ENCODE measurements at regions of chr15 and their contacts with region 1.

Region 1: DNA sequence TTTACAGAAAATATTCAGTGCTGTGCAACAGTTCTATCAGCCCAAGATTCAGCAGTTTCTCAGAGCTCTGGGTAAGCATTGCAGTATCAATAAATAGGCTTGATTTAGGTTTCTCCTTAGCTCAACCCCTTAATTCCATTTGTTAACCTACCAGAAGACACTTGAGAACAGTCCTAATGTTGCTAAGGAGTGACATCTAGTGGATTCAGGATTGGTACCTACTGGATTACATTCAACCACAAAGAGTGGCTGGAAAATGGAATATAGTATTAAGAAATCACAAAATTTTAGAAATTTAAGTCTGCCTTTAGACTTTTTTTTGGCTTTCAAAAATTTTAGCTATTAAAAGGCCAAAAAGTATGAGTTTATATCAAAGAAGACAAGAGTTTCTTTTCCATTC is 34.7 kb downstream of the POLG start:
- DNase-seq: no peak
- ATAC-seq: peak; percentile 51

Region 2: GRCh38 chr15:89206908-89207331 is 93.0 kb before region 1 on chr15:
- intact Hi-C with region 1: loop called in 1 of 2 experiments (anchors 10 kb)
- DNase-seq: peak; percentile 45 to 77
- ATAC-seq: peak; percentile 86

Region 3: GRCh38 chr15:89247441-89247840 is 52.5 kb before region 1 on chr15:
- intact Hi-C with region 1: no loop called
- DNase-seq: no peak
- ATAC-seq: no peak

Measured in left colon (tissue), 2 donors.